ENCODE measurements at regions of chr9 and their contacts with region 1.

Region 1: DNA sequence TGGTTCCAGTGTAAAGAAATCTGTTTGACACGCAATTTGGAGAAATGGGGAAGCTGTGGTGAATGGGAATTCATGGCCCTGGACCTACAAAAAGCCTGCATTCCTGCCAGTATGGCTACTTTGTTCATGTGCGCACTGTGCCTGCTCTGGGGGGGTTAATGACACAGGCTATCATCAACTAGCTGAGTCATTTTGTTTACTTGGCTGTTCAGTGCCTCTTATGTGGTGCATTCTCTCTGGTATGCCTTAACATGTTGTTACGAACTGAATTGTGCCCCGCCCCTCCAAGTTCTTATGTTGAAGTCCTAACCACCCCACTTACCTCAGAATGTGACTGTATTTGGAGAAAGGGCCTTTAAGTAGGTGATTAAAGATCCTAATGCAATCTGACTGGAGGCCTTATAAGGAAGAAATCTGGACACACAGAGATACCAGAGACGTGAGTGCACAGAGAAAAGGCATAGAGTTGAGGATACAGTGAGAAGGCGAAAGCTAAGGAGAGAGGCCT is 20.4 kb upstream of the UBAP1 start:
- DNase-seq: no peak
- H3K4me3 ChIP-seq: no peak overlapping the region
- H3K27ac ChIP-seq: no peak overlapping the region
- H3K4me1 ChIP-seq: no peaks in the 10 kb centered on the region
- H3K27me3 ChIP-seq: no peaks in the 10 kb centered on the region
- CTCF ChIP-seq: no peak

Region 2: DNA sequence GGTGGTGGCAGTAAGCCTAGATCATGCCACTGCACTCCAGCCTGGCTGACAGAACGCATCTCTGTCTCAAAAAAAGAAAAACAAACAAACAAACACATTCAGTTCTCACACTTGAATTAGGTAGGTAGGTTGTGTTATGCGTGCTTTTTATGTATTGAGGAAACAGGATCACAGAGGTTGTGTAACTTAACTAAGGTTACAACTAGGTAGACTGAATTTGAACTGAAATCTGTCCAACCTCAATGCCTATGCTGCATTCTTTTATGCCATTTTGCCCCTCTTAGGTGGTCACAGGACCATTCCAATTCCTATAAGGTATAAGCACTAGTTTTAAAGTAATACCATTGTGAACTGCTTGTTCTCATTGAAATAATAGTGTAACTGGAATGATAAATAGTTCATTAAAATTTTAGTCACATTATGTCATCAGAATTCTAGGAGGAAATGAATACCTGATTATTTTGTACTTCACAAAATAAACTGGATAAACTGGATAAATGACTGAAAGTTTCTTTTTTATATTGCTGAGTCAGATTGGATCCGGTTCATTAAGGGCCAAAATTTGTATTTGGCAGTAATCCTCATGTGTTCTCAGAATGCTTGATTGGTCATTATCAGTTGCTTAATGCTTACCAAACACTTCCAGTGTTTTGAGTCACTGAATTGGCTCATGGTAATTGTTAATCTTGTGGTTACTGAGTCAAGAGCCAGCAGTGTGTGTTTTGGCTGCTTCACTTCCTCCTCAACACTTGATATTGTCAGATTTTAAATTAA is 27.5 kb after region 1 on chr9:
- CTCF ChIA-PET with region 1: no interaction called
- POLR2A ChIA-PET with region 1: interaction called, 10 read pairs
- intact Hi-C with region 1: no loop called
- DNase-seq: peak; percentile 81
- H3K4me3 ChIP-seq: no peak overlapping the region
- H3K27ac ChIP-seq: peak overlapping the region; percentile 58
- H3K4me1 ChIP-seq: peaks cover 15% of the 10 kb centered on the region
- H3K27me3 ChIP-seq: no peaks in the 10 kb centered on the region
- CTCF ChIP-seq: no peak